T-cell (primary cell): ENCODE measurements at regions of chr15 and their contacts with region 1.

Region 1: GRCh38 chr15:55665605-55666227 is 77.2 kb downstream of the PRTG start:
- DNase-seq: no peak
- ATAC-seq: no peak
- H3K4me3 ChIP-seq: no peak overlapping the region
- H3K4me3 Mint-ChIP-seq: no peak overlapping the region
- H3K27ac ChIP-seq: no peak overlapping the region
- H3K27ac Mint-ChIP-seq: no peak overlapping the region
- H3K4me1 ChIP-seq: no peaks in the 10 kb centered on the region
- H3K4me1 Mint-ChIP-seq: no peaks in the 10 kb centered on the region
- H3K27me3 ChIP-seq: peaks cover 0 to 4% of the 10 kb centered on the region in 2 experiments
- H3K27me3 Mint-ChIP-seq: no peaks in the 10 kb centered on the region

Region 2: DNA sequence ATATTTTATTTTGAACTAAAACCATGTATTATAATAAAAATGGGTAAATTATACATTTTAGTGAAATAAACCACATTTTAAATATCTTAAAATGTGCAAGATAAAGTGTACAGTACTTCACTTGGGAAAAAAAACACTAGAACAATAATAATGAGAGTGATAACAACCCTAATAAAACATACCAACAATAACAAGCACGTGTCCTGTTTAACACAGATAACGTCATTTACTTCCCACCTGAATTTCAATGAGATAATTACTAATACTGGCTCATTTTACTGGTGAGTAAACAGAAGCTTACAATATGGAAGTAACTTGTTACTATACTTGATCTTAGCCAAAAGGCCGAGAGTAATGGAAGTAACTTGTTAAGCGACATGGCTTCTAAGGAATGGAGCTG is 187.4 kb after region 1 on chr15:
- CTCF ChIA-PET with region 1: no interaction called
- POLR2A ChIA-PET with region 1: interaction called in 1 of 2 experiments, 10 read pairs
- DNase-seq: no peak
- ATAC-seq: no peak
- H3K4me3 ChIP-seq: no peak overlapping the region
- H3K4me3 Mint-ChIP-seq: no peak overlapping the region
- H3K27ac ChIP-seq: no peak overlapping the region
- H3K27ac Mint-ChIP-seq: no peak overlapping the region
- H3K4me1 ChIP-seq: no peaks in the 10 kb centered on the region
- H3K4me1 Mint-ChIP-seq: no peaks in the 10 kb centered on the region
- H3K27me3 ChIP-seq: no peaks in the 10 kb centered on the region
- H3K27me3 Mint-ChIP-seq: no peaks in the 10 kb centered on the region